ENCODE measurements at regions of chr17 and their contacts with region 1.

Region 1: DNA sequence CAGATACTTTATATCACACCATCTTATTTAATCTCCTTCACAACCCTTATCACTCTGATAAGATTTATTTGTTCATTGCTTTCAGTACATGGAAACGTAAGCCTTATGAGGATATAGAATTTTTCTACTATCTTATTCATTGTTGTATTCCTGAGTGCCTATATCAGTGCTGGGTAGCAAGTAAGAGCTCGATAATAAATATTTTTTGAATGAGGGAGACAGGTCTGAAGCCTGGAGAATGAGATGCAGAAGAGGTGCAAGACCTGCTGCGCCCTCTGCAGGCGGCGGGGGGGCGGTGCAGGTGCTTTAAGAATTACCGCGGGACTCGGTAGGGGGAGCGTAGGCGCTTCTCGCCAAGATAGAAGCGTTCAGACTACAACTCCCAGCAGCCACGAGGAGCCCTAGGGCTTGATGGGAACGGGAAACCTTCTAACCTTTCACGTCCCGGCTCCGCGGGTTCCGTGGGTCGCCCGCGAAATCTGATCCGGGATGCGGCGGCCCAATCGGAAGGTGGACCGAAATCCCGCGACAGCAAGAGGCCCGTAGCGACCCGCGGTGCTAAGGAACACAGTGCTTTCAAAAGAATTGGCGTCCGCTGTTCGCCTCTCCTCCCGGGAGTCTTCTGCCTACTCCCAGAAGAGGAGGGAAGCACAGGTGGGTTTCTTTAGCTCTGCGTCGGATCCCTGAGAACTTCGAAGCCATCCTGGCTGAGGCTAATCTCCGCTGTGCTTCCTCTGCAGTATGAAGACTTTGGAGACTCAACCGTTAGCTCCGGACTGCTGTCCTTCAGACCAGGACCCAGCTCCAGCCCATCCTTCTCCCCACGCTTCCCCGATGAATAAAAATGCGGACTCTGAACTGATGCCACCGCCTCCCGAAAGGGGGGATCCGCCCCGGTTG is at the start of gene WRAP53:
- DNase-seq: peak; percentile 99
- H3K4me3 ChIP-seq: peak within 1 kb of the TSS; percentile 79 to 100 (median 96)
- H3K27ac ChIP-seq: peak within 1 kb of the TSS; percentile 98
- H3K4me1 ChIP-seq: peaks cover 24% of the 10 kb centered on the region
- H3K27me3 ChIP-seq: no peaks in the 10 kb centered on the region
- CTCF ChIP-seq: peak; percentile 95 to 97
- total RNA-seq, gene WRAP53: 4.3 to 15.9 TPM

Region 2: DNA sequence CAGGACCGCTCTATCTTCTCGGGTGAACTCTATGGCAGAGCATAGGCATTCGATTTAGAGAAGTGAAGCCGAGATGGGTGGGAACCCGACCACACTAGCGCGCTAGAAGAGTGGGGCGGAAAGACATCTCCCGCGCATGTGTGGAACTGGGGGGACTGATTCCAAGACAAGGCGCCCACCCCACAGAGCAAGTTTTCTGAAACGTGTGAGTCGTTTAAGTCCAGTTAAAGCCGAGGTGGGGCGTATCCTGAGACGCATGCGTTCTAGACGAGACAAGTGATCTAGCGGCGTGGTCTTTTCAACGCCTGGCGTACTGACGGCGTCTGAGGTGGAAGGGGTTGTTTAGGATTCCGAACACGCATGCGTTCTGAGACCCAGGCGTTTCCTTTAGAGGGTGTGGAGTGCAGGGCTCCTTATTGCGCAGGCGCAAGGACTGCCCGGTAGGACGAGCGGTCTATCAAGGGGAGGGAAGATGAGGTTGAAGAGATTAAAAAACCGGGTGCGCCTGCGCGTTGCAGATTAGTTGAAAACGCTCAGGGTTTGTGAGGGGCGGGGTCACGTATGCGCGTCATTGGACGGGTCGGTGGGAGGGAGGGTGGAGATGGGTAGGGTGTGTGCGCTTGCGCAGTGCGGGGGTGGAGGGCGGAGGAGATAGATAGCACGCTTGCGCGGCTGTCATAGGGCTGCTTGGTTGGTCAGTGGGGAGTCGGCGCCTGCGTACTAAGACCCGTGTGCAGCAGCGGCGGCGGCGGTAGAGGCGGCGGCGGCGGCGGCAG is 381.1 kb before region 1 on chr17 and contains the start of gene EIF5A:
- CTCF ChIA-PET with region 1: no interaction called
- dilution Hi-C with region 1: no loop called
- in situ Hi-C with region 1: no loop called
- intact Hi-C with region 1: loop called (anchors 2 kb)
- DNase-seq: peak; percentile 100
- H3K4me3 ChIP-seq: peak within 1 kb of the TSS; percentile 79 to 91 (median 80)
- H3K27ac ChIP-seq: peak within 1 kb of the TSS; percentile 91
- H3K4me1 ChIP-seq: peaks cover 24% of the 10 kb centered on the region
- H3K27me3 ChIP-seq: no peaks in the 10 kb centered on the region
- CTCF ChIP-seq: no peak
- total RNA-seq, gene EIF5A: 597 to 1,021 TPM

Region 3: DNA sequence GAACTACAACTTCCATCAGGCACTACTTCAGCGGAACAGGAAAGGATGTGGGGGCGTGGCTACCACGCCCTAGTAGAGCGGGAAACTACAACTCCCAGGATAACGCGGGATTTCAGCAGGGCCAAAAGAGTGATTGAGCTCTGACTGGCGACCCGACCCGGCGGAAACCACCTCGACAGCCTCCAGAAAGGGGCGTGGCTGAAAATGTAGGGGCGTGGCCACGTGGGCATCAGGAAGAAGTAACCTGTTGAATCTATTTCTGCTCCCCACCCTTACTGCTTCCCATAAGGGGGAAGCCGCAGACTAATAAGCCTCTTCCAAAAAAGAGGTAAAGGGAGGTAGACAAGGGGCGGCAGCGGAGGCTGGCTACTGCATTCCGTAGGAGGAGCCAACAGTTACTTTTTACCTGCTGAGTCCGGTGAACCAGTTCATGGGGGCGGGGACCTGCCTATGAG is 252.9 kb before region 1 on chr17 and contains the start of gene TMEM102:
- CTCF ChIA-PET with region 1: interaction called, 3 read pairs
- dilution Hi-C with region 1: no loop called
- in situ Hi-C with region 1: no loop called
- intact Hi-C with region 1: loop called (anchors 5 kb)
- DNase-seq: peak; percentile 97
- H3K4me3 ChIP-seq: peak within 1 kb of the TSS; percentile 60 to 85 (median 68)
- H3K27ac ChIP-seq: peak within 1 kb of the TSS; percentile 81
- H3K4me1 ChIP-seq: peaks cover 38% of the 10 kb centered on the region
- H3K27me3 ChIP-seq: no peaks in the 10 kb centered on the region
- CTCF ChIP-seq: no peak
- total RNA-seq, gene TMEM102: 14.5 to 16.0 TPM

Region 4: GRCh38 chr17:7561028-7561575 is 127.1 kb before region 1 on chr17:
- CTCF ChIA-PET with region 1: no interaction called
- dilution Hi-C with region 1: no loop called
- in situ Hi-C with region 1: no loop called
- intact Hi-C with region 1: loop called (anchors 1 kb)
- DNase-seq: peak; percentile 87
- H3K4me3 ChIP-seq: peak overlapping the region; percentile 60 to 82 (median 73)
- H3K27ac ChIP-seq: peak overlapping the region; percentile 76
- H3K4me1 ChIP-seq: peaks cover 40% of the 10 kb centered on the region
- H3K27me3 ChIP-seq: no peaks in the 10 kb centered on the region
- CTCF ChIP-seq: peak; percentile 64 to 82

Region 5: GRCh38 chr17:7614422-7615264 is 73.5 kb before region 1 on chr17 and contains the start of gene FXR2:
- CTCF ChIA-PET with region 1: no interaction called
- dilution Hi-C with region 1: loop called (anchors 5 kb)
- in situ Hi-C with region 1: no loop called
- intact Hi-C with region 1: loop called (anchors 1 kb)
- DNase-seq: peak; percentile 100
- H3K4me3 ChIP-seq: peak within 1 kb of the TSS; percentile 63 to 100 (median 94)
- H3K27ac ChIP-seq: peak within 1 kb of the TSS; percentile 81
- H3K4me1 ChIP-seq: peaks cover 21% of the 10 kb centered on the region
- H3K27me3 ChIP-seq: no peaks in the 10 kb centered on the region
- CTCF ChIP-seq: peak; percentile 38 to 74
- total RNA-seq, gene FXR2: 37.2 to 53.3 TPM

Region 6: DNA sequence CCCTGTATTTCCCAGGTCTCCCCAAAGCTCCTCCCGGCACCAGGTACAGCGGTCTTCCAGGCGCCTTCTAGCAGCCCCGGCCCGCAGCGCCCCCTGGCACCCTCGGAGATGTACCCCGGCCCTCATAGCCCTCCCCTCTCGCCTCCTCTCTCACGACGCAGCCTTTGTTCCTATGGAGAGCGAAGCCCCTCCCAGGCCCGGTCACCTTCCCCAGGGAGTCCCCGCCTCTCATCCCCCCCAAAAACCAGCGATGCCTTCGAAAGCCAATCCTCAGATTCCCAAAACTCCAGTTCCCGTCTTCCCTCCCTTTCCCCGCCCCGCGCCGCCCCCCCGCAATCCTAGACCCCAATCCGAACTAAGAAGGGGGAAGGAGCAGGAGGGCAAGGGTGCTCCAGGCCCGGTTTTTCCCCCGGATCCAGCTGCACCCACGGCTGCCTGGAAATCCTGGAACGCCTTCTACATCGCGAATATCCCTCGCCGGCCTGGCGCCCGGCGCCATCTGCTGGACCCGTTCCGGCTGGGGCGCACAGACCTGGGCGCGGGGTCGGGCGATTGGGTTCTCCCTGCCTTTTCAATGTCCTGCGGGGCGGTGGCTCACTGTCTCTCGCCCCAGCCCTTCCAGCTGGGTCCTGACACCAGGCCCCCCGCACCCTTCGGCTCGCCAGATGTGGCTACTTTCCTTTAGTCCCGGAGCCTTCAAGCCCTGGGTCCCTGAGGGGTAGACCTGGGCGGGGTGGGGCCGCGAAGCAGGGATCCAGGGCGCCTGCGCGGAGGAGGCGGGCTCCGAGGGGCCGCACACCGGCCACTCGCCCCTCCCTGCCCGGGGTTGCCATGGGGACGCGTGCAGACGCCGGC is 29.0 kb after region 1 on chr17 and contains the start of gene DNAH2:
- CTCF ChIA-PET with region 1: no interaction called
- dilution Hi-C with region 1: no loop called
- in situ Hi-C with region 1: no loop called
- intact Hi-C with region 1: loop called (anchors 1 kb)
- DNase-seq: peak; percentile 91
- H3K4me3 ChIP-seq: peak within 1 kb of the TSS; percentile 71 to 78 (median 75)
- H3K27ac ChIP-seq: peak within 1 kb of the TSS; percentile 13
- H3K4me1 ChIP-seq: peaks cover 8% of the 10 kb centered on the region
- H3K27me3 ChIP-seq: peaks cover 3% of the 10 kb centered on the region
- CTCF ChIP-seq: peak in 1 of 2 donors; percentile 73
- total RNA-seq, gene DNAH2: 1.8 to 2.7 TPM

Region 7: DNA sequence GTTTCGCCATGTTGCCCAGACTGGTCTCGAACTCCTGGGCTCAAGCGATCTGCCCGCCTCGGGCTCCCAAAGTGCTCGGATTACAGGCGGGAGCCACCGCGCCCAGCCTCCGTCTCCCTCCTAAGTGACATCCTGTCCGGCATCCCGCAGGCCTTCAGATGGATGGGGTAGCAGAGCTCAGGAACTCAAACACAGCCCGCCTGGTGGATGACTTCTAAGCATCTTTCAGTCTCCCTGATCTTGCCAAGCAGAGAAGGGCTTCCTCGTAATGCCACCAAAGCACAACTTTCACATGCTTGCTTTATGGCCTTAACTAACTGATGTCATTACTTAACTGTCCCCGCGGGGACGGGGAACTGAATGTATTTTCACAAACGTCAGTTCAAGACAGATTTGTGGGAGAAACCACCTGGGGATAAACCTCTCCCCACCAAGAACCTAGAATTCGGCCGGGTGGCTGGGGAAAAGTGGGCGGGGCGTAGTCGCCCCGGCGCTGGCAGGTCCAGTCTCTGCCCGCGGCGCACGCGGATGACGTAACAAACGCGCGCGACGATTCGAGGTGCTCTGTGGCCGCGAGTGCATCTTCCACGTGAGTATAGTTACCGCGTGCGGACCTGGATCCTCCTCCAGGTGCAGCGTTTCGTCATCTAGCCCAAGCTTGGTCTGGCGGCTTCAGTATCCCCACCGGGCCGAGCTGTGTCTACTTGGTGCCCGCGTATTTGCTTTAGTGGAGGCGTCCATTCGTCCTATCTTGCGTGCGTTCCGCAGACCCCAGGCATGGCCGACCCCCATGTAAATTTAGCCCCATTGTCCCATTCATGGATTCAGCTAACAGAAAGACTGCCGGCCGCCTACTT is 560.8 kb after region 1 on chr17 and contains the start of gene PFAS:
- CTCF ChIA-PET with region 1: no interaction called
- dilution Hi-C with region 1: no loop called
- in situ Hi-C with region 1: no loop called
- intact Hi-C with region 1: loop called (anchors 5 kb)
- DNase-seq: peak; percentile 93
- H3K4me3 ChIP-seq: peak within 1 kb of the TSS; percentile 82 to 96 (median 89)
- H3K27ac ChIP-seq: peak within 1 kb of the TSS; percentile 92
- H3K4me1 ChIP-seq: peaks cover 12% of the 10 kb centered on the region
- H3K27me3 ChIP-seq: no peaks in the 10 kb centered on the region
- CTCF ChIP-seq: no peak
- total RNA-seq, gene PFAS: 8.5 to 31.2 TPM

Measured in mammary epithelial cell (primary cell).